Heart left ventricle (tissue), 16 donors: ENCODE measurements at regions of chr1 and their contacts with region 1.

Region 1: DNA sequence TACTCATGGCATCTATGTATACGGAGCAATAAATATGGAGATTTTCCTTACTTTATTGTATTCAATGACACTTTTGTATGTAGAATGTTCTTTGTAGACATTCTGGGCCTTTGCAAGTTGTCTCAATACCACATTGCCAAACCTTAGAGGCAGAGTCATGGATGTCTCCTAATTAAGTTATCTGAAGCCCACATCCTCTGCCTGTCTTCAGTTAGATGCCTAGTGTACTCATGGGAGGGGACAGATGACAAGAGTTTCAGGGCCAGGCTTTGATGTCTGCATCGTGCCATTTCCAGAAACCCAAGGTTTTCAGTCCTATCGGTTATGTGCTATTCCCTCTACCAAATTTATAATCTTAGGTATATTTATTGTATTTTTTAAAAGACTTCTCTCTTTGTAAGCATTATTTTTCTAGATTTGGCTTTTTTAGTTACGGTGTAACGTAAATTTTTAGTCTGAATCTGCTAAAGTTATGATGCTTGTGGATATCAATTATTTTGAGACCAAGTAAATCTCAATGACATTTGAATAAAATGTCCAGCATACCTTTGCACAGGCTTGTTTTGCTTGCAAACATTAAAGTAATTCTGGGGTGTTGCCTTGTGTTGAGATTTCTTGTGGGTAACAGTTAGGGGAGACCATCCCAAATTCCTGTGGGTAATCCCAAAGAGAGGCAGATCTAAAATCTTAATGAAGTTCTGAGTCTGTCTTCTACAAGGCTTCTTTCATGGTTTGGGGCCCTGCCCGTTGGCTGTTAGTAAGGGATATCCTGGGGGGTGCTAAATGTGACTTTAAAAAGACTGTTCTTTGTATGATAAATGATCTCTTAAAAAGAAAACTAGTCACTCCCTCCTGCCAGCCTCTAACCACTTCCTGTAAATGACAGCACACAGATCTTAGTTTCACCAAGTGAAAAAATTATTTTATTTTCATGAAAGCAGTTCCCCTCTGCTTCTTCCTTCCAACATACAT is 8.0 kb upstream of the MACF1 start:
- DNase-seq: no peak
- ATAC-seq: no peak
- H3K4me3 ChIP-seq: peak overlapping the region in 1 of 12 donors; percentile 15
- H3K27ac ChIP-seq: peak overlapping the region in 5 of 12 donors; percentile 21 to 91 (median 41)
- H3K4me1 ChIP-seq: peaks cover 8 to 67% (median 37%) of the 10 kb centered on the region in 12 donors
- H3K27me3 ChIP-seq: no peaks in the 10 kb centered on the region
- CTCF ChIP-seq: no peak
- POLR2A ChIP-seq: no peak

Region 2: GRCh38 chr1:39250460-39251240 is 54.1 kb after region 1 on chr1:
- intact Hi-C with region 1: loop called in 2 of 10 experiments (anchors 5 kb)
- DNase-seq: no peak
- ATAC-seq: no peak
- H3K4me3 ChIP-seq: no peak overlapping the region
- H3K27ac ChIP-seq: peak overlapping the region in 1 of 12 donors; percentile 35
- H3K4me1 ChIP-seq: peaks cover 0 to 31% (median 17%) of the 10 kb centered on the region in 12 donors
- H3K27me3 ChIP-seq: no peaks in the 10 kb centered on the region
- CTCF ChIP-seq: no peak
- POLR2A ChIP-seq: no peak